PC-9 (cell line): ENCODE measurements at regions of chr19 and their contacts with region 1.

Region 1: GRCh38 chr19:12766051-12766521 is 9.3 kb downstream of the HOOK2 start:
- DNase-seq: peak; percentile 59 to 85
- H3K4me3 ChIP-seq: peak overlapping the region; percentile 25; the same call in 1 of the 2 replicates
- H3K27ac ChIP-seq: no peak overlapping the region
- H3K4me1 ChIP-seq: no peaks in the 10 kb centered on the region
- H3K27me3 ChIP-seq: no peaks in the 10 kb centered on the region
- CTCF ChIP-seq: peak; percentile 85

Region 2: DNA sequence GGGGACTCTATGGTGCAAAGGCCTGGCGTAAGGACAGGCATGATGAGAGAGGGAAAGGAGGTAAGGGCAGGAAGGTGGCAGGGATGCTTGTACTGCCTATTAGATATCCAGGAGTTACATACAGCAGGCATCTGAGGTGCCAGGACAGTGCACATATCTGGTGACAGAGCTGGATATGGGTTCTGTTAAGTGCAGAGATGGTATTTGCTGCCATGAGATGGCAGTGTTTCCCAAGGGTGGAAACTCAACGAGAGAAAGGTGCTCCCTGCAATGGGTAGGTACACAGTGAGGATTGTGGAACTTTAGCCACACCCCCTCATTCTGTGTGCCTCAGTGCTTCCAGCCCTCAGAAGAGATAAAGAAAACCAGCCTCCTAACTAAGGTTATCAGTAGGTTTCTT is 49.2 kb before region 1 on chr19:
- CTCF ChIA-PET with region 1: interaction called, 13 read pairs
- POLR2A ChIA-PET with region 1: interaction called, 17 read pairs
- intact Hi-C with region 1: no loop called
- DNase-seq: peak; percentile 39 to 81
- H3K4me3 ChIP-seq: no peak overlapping the region
- H3K27ac ChIP-seq: no peak overlapping the region
- H3K4me1 ChIP-seq: peaks cover 9% of the 10 kb centered on the region; the same call in 1 of the 2 replicates
- H3K27me3 ChIP-seq: no peaks in the 10 kb centered on the region
- CTCF ChIP-seq: peak; percentile 70

Region 3: GRCh38 chr19:12745166-12745897 is 20.8 kb before region 1 on chr19:
- CTCF ChIA-PET with region 1: interaction called, 3 read pairs
- POLR2A ChIA-PET with region 1: interaction called, 13 read pairs
- intact Hi-C with region 1: no loop called
- DNase-seq: peak; percentile 62 to 67
- H3K4me3 ChIP-seq: no peak overlapping the region
- H3K27ac ChIP-seq: no peak overlapping the region
- H3K4me1 ChIP-seq: peaks cover 15% of the 10 kb centered on the region
- H3K27me3 ChIP-seq: no peaks in the 10 kb centered on the region
- CTCF ChIP-seq: no peak